ENCODE measurements at regions of chr1 and their contacts with region 1.

Region 1: GRCh38 chr1:225454733-225455132 is 26.9 kb upstream of the LBR start:
- DNase-seq: peak; percentile 62
- H3K4me3 Mint-ChIP-seq: no peak overlapping the region
- H3K27ac Mint-ChIP-seq: peak overlapping the region; percentile 77
- H3K4me1 Mint-ChIP-seq: peaks cover 50% of the 10 kb centered on the region
- H3K27me3 Mint-ChIP-seq: no peaks in the 10 kb centered on the region

Region 2: GRCh38 chr1:225299624-225300023 is 155.1 kb before region 1 on chr1:
- CTCF ChIA-PET with region 1: no interaction called
- POLR2A ChIA-PET with region 1: no interaction called
- DNase-seq: no peak
- H3K4me3 Mint-ChIP-seq: no peak overlapping the region
- H3K27ac Mint-ChIP-seq: no peak overlapping the region
- H3K4me1 Mint-ChIP-seq: no peaks in the 10 kb centered on the region
- H3K27me3 Mint-ChIP-seq: peaks cover 3% of the 10 kb centered on the region

Region 3: GRCh38 chr1:225467193-225468020 is 12.7 kb after region 1 on chr1:
- CTCF ChIA-PET with region 1: interaction called, 4 read pairs
- POLR2A ChIA-PET with region 1: interaction called, 38 read pairs
- DNase-seq: peak; percentile 91
- H3K4me3 Mint-ChIP-seq: peak overlapping the region; percentile 91
- H3K27ac Mint-ChIP-seq: peak overlapping the region; percentile 99
- H3K4me1 Mint-ChIP-seq: peaks cover 64% of the 10 kb centered on the region
- H3K27me3 Mint-ChIP-seq: no peaks in the 10 kb centered on the region

Region 4: DNA sequence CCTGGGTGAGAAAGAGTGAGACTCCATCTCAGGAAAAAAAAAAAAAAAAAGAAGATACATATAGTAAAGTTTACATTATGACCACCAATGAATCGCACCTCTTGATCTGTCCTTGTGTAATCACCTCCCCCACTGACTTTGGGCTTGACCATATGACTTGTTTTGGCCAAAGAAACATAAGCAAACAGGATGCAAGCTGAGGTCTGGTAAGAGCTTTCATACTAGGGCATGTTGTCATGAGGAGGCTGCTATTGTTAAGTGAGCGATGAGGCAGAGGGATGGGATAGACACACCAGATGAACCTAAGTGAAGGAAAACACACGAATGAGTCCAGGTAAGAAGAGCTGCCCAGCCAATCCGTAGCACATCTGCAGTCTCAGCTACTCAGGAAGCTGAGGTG is 187.4 kb after region 1 on chr1:
- CTCF ChIA-PET with region 1: no interaction called
- POLR2A ChIA-PET with region 1: no interaction called
- DNase-seq: no peak
- H3K4me3 Mint-ChIP-seq: no peak overlapping the region
- H3K27ac Mint-ChIP-seq: no peak overlapping the region
- H3K4me1 Mint-ChIP-seq: no peaks in the 10 kb centered on the region
- H3K27me3 Mint-ChIP-seq: peaks cover 12% of the 10 kb centered on the region